ENCODE measurements at regions of chr7 and their contacts with region 1.

Region 1: DNA sequence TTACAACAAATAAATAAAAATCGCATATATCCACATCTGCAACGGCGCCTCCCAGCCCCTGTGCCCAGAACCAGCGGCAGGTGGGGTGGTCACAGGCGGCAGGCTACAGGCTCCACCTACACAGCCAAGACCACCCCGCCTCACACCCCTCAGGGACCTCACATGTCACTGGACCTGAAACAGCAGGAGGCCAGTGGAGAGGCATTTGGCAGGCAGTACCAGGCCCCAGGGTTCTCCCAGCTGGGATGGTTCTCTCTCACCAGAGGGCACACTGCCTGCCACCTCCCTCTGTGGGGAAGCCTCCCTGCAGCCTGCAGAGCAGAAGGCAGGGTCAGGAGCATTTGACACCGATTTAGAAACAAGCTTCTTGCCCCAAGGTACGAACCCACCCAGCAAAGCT is 81.5 kb downstream of the MAD1L1 start:
- DNase-seq: no peak
- H3K4me3 ChIP-seq: no peak overlapping the region
- H3K27ac ChIP-seq: no peak overlapping the region
- H3K4me1 ChIP-seq: no peaks in the 10 kb centered on the region
- H3K27me3 ChIP-seq: no peaks in the 10 kb centered on the region
- CTCF ChIP-seq: no peak

Region 2: DNA sequence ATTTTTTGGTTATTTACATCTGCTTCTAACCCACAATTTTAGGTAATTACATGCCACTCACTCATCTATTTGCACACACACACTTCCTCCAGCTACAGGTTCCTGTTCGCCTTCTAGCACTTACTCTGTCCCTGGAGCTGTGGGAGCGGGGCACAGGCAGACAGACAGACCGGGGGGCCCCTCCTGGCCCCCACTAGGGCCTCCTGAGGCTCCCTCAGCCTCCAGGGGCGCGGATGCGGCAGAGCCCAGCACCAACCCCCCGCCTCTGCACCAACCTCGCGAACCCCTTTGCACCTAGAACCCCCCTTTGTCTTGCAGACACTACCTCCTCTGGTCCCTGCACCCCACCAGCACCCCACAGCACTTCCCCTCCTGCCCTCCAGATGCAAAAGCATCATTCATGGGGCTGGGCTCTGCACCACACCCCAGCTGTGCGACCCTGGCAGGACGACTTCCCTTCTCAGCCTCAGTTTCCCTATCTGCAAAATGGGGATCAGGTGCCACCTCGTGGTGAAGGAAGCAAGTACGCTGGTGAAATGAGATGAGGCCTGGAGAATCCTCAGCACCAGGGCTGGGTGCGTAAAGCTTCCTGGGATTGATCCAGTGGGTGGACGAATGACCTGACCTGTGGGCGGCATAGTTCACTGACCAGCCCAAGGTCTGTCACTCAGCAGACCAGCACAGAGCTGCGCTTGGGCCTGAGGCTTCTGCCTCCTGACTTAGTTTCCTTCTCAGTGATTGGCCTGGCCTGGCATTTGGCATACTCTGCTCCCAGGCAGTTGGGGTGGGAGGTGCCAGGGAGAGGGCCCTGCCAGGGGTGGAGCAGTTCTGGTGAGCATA is 443.3 kb before region 1 on chr7:
- CTCF ChIA-PET with region 1: no interaction called
- dilution Hi-C with region 1: no loop called
- in situ Hi-C with region 1: no loop called
- intact Hi-C with region 1: no loop called
- DNase-seq: no peak
- H3K4me3 ChIP-seq: no peak overlapping the region
- H3K27ac ChIP-seq: no peak overlapping the region
- H3K4me1 ChIP-seq: no peaks in the 10 kb centered on the region
- H3K27me3 ChIP-seq: no peaks in the 10 kb centered on the region
- CTCF ChIP-seq: peak in 1 of 2 donors; percentile 28

Region 3: DNA sequence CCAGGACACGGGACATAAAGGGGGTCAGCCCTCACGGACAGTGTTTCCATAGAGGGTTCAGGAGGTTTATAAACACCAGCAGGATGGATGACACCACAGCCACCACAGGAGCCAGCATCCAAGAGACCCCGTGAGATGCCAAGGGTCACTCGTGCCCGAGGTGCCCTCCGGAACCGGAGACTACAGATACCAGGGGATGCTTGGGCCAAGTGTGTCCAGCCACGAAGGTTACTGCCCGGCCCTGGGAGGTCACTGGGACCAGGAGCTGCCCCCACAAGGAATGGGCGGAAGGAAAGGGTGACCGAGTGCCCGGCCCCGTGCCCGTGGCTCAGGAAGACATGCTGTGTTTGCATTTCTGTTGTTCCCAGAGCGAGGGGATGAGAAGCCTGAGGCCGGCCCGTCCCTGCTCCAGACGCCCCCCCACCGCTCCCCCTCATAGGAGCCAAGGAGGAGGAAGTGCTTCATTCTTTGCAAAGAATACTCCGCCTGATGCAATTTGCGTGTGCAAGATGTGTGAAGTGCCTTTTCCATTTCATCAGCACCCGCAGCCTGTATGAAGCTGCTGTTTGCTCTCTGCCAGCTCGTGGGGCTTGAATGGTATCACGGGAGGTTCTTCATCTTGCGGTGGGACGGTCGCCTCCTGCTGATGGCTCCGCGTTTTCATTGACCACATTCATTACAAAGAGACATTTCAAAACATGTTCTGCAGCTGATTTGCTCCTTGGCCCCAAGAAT is 304.7 kb before region 1 on chr7:
- CTCF ChIA-PET with region 1: no interaction called
- dilution Hi-C with region 1: loop called (anchors 5 kb)
- in situ Hi-C with region 1: no loop called
- intact Hi-C with region 1: no loop called
- DNase-seq: no peak
- H3K4me3 ChIP-seq: no peak overlapping the region
- H3K27ac ChIP-seq: no peak overlapping the region
- H3K4me1 ChIP-seq: no peaks in the 10 kb centered on the region
- H3K27me3 ChIP-seq: no peaks in the 10 kb centered on the region
- CTCF ChIP-seq: no peak

Region 4: DNA sequence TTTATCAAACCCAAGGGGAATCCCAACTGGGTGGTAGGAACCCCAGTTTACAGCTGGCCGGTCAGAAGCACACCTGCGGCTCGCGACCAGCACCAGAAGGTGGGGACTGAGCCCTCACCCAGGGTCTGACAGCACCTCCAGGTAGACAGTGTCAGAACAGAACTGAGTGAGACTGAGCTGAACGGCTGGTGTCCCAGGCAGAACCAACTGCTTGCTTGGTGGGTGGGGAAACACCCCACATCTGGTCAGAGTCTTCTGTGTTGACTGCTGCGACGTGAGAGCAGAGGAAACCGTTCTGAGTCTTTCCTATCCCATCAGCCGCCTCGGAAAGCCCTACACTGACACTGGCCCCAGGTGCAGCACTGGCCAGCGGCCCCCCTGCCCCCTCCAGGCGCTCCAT is 79.2 kb before region 1 on chr7:
- CTCF ChIA-PET with region 1: no interaction called
- dilution Hi-C with region 1: loop called (anchors 5 kb)
- in situ Hi-C with region 1: no loop called
- intact Hi-C with region 1: no loop called
- DNase-seq: no peak
- H3K4me3 ChIP-seq: no peak overlapping the region
- H3K27ac ChIP-seq: no peak overlapping the region
- H3K4me1 ChIP-seq: no peaks in the 10 kb centered on the region
- H3K27me3 ChIP-seq: no peaks in the 10 kb centered on the region
- CTCF ChIP-seq: no peak

Measured in mammary epithelial cell (primary cell).